ENCODE measurements at regions of chr16 and their contacts with region 1.

Region 1: DNA sequence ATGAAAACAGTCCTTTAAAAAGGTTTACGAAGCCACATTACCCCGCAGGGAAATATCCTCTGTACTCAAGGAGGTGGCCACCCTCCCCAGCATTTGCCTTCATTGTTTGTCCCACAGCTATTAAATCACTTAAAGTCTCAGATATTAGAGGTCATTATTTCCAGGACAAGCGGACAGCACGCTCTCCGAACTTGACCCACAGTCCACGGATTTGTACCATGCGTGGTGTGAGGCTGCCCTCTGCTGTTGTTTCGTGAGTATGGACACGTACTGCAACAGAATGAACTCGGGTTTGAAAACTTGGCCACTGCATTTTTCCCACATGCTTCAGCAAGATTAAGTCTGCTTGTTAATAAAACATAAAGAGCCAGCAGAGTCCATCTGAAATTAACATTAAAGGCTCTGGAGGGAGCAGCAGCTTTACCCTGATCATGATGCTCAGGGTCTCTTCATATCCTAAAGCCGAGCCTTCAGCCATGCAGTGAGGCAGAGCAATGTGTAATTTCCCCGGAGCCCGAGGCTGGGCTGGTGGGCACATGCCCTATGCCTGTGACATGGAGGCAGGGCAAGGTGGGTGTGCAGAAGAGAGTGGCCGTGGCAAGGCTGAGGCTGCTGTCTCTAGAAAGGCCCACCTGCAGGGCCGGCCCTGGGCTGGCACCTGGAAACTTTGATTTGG is 19.7 kb downstream of the MEAK7 start:
- DNase-seq: peak; percentile 68
- ATAC-seq: peak; percentile 79
- H3K4me3 ChIP-seq: no peak overlapping the region
- H3K27ac ChIP-seq: no peak overlapping the region
- H3K4me1 ChIP-seq: no peaks in the 10 kb centered on the region
- H3K27me3 ChIP-seq: no peaks in the 10 kb centered on the region
- CTCF ChIP-seq: peak; percentile 68

Region 2: GRCh38 chr16:84277237-84277823 is 207.4 kb before region 1 on chr16:
- intact Hi-C with region 1: loop called (anchors 10 kb)
- DNase-seq: peak; percentile 81
- ATAC-seq: peak; percentile 87
- H3K4me3 ChIP-seq: no peak overlapping the region
- H3K27ac ChIP-seq: no peak overlapping the region
- H3K4me1 ChIP-seq: no peaks in the 10 kb centered on the region
- H3K27me3 ChIP-seq: no peaks in the 10 kb centered on the region
- CTCF ChIP-seq: peak; percentile 94

Region 3: GRCh38 chr16:84323621-84324020 is 161.1 kb before region 1 on chr16:
- intact Hi-C with region 1: no loop called
- DNase-seq: peak; percentile 32
- ATAC-seq: no peak
- H3K4me3 ChIP-seq: no peak overlapping the region
- H3K27ac ChIP-seq: no peak overlapping the region
- H3K4me1 ChIP-seq: no peaks in the 10 kb centered on the region
- H3K27me3 ChIP-seq: no peaks in the 10 kb centered on the region
- CTCF ChIP-seq: no peak